OCI-LY7 (cell line): ENCODE measurements at regions of chr16 and their contacts with region 1.

Region 1: GRCh38 chr16:31873556-31874365 is at the start of gene ZNF267:
- DNase-seq: peak; percentile 97
- H3K4me3 ChIP-seq: peak within 1 kb of the TSS; percentile 95
- H3K27ac ChIP-seq: peak within 1 kb of the TSS; percentile 92
- H3K4me1 ChIP-seq: peaks cover 44% of the 10 kb centered on the region
- CTCF ChIP-seq: no peak
- total RNA-seq, gene ZNF267: 23.3 and 23.5 TPM in 2 replicates

Region 2: GRCh38 chr16:31713071-31713944 is 160.5 kb before region 1 on chr16:
- CTCF ChIA-PET with region 1: no interaction called
- POLR2A ChIA-PET with region 1: interaction called, 5 read pairs
- intact Hi-C with region 1: loop called (anchors 1 kb)
- DNase-seq: peak; percentile 96
- H3K4me3 ChIP-seq: peak overlapping the region; percentile 92
- H3K27ac ChIP-seq: peak overlapping the region; percentile 80
- H3K4me1 ChIP-seq: peaks cover 24% of the 10 kb centered on the region
- CTCF ChIP-seq: no peak

Region 3: GRCh38 chr16:31916056-31916488 is 42.3 kb after region 1 on chr16:
- CTCF ChIA-PET with region 1: no interaction called
- POLR2A ChIA-PET with region 1: no interaction called
- intact Hi-C with region 1: loop called (anchors 5 kb)
- DNase-seq: peak; percentile 7
- H3K4me3 ChIP-seq: no peak overlapping the region
- H3K27ac ChIP-seq: no peak overlapping the region
- H3K4me1 ChIP-seq: no peaks in the 10 kb centered on the region
- CTCF ChIP-seq: no peak